ENCODE measurements at regions of chr20 and their contacts with region 1.

Region 1: GRCh38 chr20:41317536-41318270 is at the start of gene ZHX3:
- DNase-seq: peak; percentile 97
- H3K4me3 Mint-ChIP-seq: peak within 1 kb of the TSS; percentile 67
- H3K27ac Mint-ChIP-seq: peak within 1 kb of the TSS; percentile 14
- H3K4me1 Mint-ChIP-seq: peaks cover 20% of the 10 kb centered on the region
- H3K27me3 Mint-ChIP-seq: no peaks in the 10 kb centered on the region
- total RNA-seq, gene ZHX3: 9.4 to 11.3 TPM

Region 2: GRCh38 chr20:41329435-41330342 is 12.0 kb after region 1 on chr20:
- CTCF ChIA-PET with region 1: no interaction called
- POLR2A ChIA-PET with region 1: interaction called, 3 read pairs
- intact Hi-C with region 1: loop called (anchors 1 kb)
- DNase-seq: peak; percentile 81
- H3K4me3 Mint-ChIP-seq: no peak overlapping the region
- H3K27ac Mint-ChIP-seq: peak overlapping the region; percentile 61
- H3K4me1 Mint-ChIP-seq: peaks cover 11% of the 10 kb centered on the region
- H3K27me3 Mint-ChIP-seq: no peaks in the 10 kb centered on the region

Region 3: DNA sequence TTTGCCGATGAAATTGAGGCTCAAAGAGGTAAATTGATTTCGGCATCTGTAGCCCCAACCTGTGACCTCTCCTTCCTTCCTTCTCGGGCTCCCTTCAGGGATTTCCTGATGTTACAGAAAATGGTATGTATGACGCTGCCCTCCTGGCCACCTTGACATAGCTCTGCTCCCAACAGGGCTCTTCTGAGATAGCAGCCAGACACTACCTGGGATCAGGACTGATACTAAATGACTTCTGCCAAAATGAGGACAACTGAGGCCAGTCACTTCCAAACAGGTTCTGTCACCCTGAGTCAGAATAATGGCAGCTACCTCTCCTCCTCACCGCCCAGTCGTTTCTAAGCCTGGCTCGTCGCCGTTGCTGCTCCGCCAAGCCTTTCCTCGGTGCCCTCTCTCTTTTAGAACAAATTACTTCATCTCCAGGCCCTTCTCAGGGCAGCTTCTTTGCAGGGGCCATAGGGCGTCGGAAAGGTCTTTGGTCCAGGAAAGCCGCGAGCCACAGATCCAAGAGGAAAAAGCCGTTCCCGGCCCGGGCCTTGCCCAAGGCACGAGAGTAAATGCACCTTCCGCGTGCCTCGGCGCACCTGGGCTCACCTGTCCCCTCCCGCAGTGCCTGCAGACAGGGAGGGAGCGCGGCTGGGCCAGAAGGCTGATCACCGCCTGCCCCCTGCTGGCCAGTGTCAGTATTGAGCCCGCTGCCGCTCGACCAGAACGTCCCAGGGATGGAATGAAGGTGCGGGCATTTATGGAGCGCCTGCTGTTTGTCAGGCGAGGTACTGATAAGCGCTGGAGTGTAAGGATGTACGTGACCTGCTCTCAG is 22.0 kb after region 1 on chr20:
- CTCF ChIA-PET with region 1: interaction called, 5 read pairs
- POLR2A ChIA-PET with region 1: no interaction called
- intact Hi-C with region 1: loop called (anchors 1 kb)
- DNase-seq: peak; percentile 90
- H3K4me3 Mint-ChIP-seq: peak overlapping the region; percentile 63
- H3K27ac Mint-ChIP-seq: no peak overlapping the region
- H3K4me1 Mint-ChIP-seq: peaks cover 5% of the 10 kb centered on the region
- H3K27me3 Mint-ChIP-seq: peaks cover 7% of the 10 kb centered on the region

Region 4: GRCh38 chr20:41524980-41525613 is 207.4 kb after region 1 on chr20:
- CTCF ChIA-PET with region 1: no interaction called
- POLR2A ChIA-PET with region 1: no interaction called
- intact Hi-C with region 1: no loop called
- DNase-seq: no peak
- H3K4me3 Mint-ChIP-seq: no peak overlapping the region
- H3K27ac Mint-ChIP-seq: no peak overlapping the region
- H3K4me1 Mint-ChIP-seq: peaks cover 25% of the 10 kb centered on the region
- H3K27me3 Mint-ChIP-seq: no peaks in the 10 kb centered on the region

Measured in activated CD4-positive, alpha-beta memory T cell treated with anti-CD3 and anti-CD28 coated beads for 36 hours (primary cell).